Activated naive CD4-positive, alpha-beta T cell treated with anti-CD3 and anti-CD28 coated beads, Interleukin-2, amount 10 ng/mL, durations not matched to agents 7 days and 5 days (primary cell): ENCODE measurements at regions of chr1 and their contacts with region 1.

Region 1: GRCh38 chr1:225777583-225778336 is at the start of gene SRP9:
- DNase-seq: peak; percentile 100
- H3K4me3 Mint-ChIP-seq: no peak within 1 kb of the TSS
- H3K27ac Mint-ChIP-seq: no peak within 1 kb of the TSS
- H3K4me1 Mint-ChIP-seq: peaks cover 33% of the 10 kb centered on the region
- H3K27me3 Mint-ChIP-seq: peaks cover 3% of the 10 kb centered on the region

Region 2: GRCh38 chr1:225572422-225572821 is 205.3 kb before region 1 on chr1:
- CTCF ChIA-PET with region 1: no interaction called
- DNase-seq: no peak
- H3K4me3 Mint-ChIP-seq: no peak overlapping the region
- H3K27ac Mint-ChIP-seq: no peak overlapping the region
- H3K4me1 Mint-ChIP-seq: no peaks in the 10 kb centered on the region
- H3K27me3 Mint-ChIP-seq: no peaks in the 10 kb centered on the region

Region 3: GRCh38 chr1:225794954-225795353 is 17.2 kb after region 1 on chr1:
- CTCF ChIA-PET with region 1: no interaction called
- DNase-seq: no peak
- H3K4me3 Mint-ChIP-seq: no peak overlapping the region
- H3K27ac Mint-ChIP-seq: no peak overlapping the region
- H3K4me1 Mint-ChIP-seq: no peaks in the 10 kb centered on the region
- H3K27me3 Mint-ChIP-seq: no peaks in the 10 kb centered on the region

Region 4: DNA sequence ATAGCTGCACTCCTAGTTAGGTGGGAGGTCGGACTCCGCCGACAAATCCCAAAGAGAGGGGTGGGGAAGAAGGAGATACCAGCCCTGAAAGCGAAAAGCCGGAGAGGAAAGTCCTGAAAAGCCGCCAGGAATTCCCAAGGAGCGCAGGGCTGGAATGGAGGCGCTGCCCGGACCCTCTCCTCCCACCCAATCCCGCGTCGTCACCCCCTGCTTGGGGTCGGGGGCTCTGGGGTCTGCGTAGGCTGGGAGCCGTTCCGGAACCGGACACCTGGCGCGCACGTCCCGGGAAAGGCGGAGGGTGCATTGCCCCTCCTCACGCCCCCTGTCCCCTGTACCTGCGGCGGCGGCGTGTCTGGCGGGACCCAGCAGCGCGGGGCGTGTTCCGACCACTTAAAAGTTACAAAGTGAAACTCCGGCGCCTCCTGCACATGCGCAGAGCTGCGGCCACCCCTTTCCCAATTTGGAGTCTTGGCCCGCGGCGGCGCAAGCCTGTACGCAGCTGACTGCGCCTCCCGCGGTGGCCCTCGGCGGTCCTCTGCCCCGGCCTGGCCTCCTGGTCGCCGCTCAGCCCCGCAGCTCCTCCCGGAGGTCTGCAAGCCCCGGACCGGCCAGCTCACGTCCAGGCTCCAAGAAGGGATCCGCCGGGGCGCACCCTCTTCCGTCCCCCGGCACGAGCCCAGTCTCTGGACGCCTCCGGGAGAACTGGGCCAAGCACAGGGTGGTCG is 104.4 kb after region 1 on chr1 and contains the start of gene TMEM63A:
- CTCF ChIA-PET with region 1: interaction called, 12 read pairs
- DNase-seq: peak; percentile 96
- H3K4me3 Mint-ChIP-seq: peak within 1 kb of the TSS; percentile 96
- H3K27ac Mint-ChIP-seq: peak within 1 kb of the TSS; percentile 96
- H3K4me1 Mint-ChIP-seq: peaks cover 52% of the 10 kb centered on the region
- H3K27me3 Mint-ChIP-seq: peaks cover 11% of the 10 kb centered on the region